Psoas muscle (tissue), 8 donors: ENCODE measurements at regions of chr4 and their contacts with region 1.

Region 1: DNA sequence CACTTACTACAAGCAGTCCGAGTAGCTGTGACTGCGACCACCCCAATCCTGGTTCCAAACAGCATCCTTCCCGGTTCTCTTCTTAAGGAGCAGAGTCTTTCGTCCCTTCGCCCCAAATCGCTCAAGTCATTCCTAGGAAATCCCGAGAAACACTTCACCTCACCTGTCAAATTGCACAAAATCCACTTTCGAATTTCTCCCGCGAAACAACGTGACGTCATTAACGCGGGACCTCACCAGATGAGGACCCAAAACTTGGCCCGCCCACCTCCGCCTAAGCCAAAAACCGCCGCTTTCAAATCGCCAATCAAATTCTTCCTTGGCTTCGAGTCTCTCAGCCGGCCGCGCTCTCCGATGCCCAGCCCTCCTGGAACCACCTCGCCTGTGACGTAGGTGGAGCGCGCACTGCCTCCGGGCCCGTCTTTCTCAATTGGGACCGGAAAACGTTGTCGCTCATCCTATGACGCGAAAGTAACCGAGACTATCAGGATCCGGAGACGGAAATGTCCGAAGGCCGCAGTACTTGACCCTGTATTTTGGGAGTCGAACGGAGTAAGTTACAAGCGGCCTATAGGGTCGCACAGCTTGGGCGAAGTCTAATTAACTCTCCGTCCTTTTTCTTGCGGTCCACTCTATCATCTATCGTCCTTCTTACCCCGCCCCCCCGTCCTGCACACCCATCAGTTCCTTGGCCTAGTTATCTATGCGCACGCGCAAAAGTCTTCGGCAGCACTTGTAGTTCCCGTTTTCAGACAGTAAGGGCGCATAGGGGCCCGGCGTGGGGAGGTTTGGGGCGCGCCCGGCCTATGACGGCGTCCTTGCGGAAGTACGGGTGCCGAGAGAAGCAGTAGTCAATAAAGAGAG is at the starts of genes LARP7 and ZGRF1:
- DNase-seq: peak; percentile 99
- ATAC-seq: peak; percentile 95 to 97 (median 96)
- H3K4me3 ChIP-seq: peak within 1 kb of the TSS; percentile 80
- H3K27ac ChIP-seq: peak within 1 kb of the TSS; percentile 94
- H3K4me1 ChIP-seq: peaks cover 17% of the 10 kb centered on the region
- H3K27me3 ChIP-seq: no peaks in the 10 kb centered on the region
- CTCF ChIP-seq: peak; percentile 84
- total RNA-seq, gene LARP7: 25.7 to 39.6 (median 32.5) TPM
- total RNA-seq, gene ZGRF1: 0.79 to 2.0 (median 1.5) TPM

Region 2: DNA sequence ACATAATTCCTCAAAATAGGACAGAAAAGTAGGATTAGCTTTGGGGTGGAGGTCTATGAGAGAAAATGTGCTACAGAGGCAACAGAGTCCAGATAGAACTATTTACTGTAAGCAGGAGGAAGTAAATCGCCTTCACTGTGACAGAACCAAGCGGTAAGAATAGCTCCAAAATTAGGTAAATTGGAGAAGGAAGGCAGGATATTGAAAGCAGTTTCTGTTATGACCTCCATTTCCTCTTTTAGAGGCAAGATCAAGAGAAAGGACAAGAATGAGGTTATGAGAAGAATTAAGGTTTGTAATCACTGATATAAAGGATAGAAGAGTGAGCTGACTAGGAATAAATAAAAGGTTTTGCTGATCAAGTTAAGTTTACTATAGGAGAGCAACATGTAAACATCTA is 76.8 kb before region 1 on chr4:
- intact Hi-C with region 1: no loop called
- DNase-seq: no peak
- ATAC-seq: no peak
- H3K4me3 ChIP-seq: no peak overlapping the region
- H3K27ac ChIP-seq: no peak overlapping the region
- H3K4me1 ChIP-seq: no peaks in the 10 kb centered on the region
- H3K27me3 ChIP-seq: no peaks in the 10 kb centered on the region
- CTCF ChIP-seq: no peak

Region 3: GRCh38 chr4:112616984-112617383 is 19.9 kb before region 1 on chr4:
- intact Hi-C with region 1: no loop called
- DNase-seq: no peak
- ATAC-seq: no peak
- H3K4me3 ChIP-seq: no peak overlapping the region
- H3K27ac ChIP-seq: no peak overlapping the region
- H3K4me1 ChIP-seq: no peaks in the 10 kb centered on the region
- H3K27me3 ChIP-seq: no peaks in the 10 kb centered on the region
- CTCF ChIP-seq: no peak

Region 4: DNA sequence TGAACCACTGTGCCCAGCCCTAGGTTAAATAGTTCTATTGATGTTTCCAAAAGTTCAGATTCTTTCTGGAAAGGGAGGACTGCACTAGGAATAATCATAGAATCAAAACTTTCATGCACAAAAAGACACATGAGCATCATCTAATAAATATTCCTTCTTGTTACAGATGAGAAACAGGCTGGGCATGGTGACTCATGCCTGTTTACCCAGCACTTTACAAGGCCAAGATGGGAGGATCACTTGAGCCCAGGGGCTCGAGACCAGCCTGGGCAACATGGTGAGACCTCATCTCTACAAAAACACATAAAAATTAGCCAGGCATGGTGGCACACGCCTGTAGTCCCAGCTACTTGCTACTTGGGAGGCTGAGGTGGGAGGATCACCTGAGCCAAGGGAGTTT is 27.7 kb after region 1 on chr4:
- intact Hi-C with region 1: loop called in 1 of 2 experiments (anchors 2 kb)
- DNase-seq: no peak
- ATAC-seq: no peak
- H3K4me3 ChIP-seq: no peak overlapping the region
- H3K27ac ChIP-seq: no peak overlapping the region
- H3K4me1 ChIP-seq: no peaks in the 10 kb centered on the region
- H3K27me3 ChIP-seq: no peaks in the 10 kb centered on the region
- CTCF ChIP-seq: no peak

Region 5: DNA sequence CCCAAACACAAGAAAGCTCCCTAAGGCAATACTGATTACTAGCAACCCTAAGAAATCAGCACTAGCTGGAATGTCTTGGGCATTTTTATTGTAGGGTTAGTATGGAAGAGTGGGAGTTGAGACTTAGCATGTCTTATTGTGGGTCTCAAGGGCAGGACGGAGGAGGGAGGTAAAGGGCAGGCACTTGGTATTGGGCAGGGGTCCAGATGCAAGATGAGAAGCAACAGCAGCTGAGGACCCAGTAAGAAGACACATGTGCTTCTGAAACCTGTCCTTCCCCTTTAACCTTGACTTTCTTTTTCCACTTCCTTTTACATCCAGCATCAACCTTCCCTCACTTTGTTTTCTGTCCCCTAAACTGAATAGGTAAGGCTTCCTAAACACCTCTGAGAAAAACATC is 37.5 kb after region 1 on chr4:
- intact Hi-C with region 1: loop called in 1 of 2 experiments (anchors 5 kb)
- DNase-seq: no peak
- ATAC-seq: peak in 1 of 4 donors; percentile 44
- H3K4me3 ChIP-seq: no peak overlapping the region
- H3K27ac ChIP-seq: peak overlapping the region; percentile 72
- H3K4me1 ChIP-seq: peaks cover 26% of the 10 kb centered on the region
- H3K27me3 ChIP-seq: no peaks in the 10 kb centered on the region
- CTCF ChIP-seq: no peak

Region 6: DNA sequence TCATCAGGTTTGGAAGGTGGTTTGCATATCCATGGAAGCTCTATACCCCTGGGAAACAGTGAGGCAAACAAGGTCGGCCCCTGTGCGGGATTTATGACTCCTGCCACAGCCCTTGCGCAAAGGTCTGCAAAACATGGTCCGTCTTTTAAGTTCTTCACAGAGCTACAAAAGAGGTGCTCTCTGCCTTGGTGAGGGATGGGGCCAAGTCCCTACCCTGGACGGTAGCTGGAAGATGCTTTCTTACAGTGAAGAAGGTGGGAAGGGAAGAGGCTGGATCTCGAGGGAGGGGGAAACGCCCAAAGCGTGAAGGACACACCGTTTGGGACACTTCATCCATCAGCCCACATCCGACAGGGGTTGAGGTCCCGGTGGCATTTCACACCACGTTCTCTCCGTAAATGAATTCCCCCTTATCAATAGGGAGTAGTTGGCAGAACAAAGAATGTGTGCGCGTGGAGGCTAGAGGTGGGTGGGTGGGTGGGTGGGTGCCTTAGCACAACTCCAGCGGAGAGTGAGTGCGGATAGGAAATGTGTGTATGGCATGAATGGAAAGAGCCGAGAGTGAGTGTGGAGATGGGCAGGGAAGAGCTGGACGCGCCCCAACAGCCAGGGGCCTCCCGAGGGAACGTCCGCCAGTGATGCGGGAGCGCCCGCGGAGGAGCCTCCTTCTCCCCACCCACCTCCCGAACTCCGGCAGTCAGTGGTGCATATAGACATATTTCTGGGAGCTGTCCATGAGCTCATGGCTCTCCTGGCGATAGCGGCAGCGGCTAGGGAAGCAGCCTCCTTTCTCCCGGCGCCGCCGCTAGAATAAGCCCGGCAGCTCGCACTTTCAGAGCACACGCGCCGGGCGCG is 68.3 kb after region 1 on chr4:
- intact Hi-C with region 1: loop called in 1 of 2 experiments (anchors 2 kb)
- DNase-seq: peak; percentile 24 to 68
- ATAC-seq: peak; percentile 72 to 83 (median 75)
- H3K4me3 ChIP-seq: peak overlapping the region; percentile 77
- H3K27ac ChIP-seq: peak overlapping the region; percentile 33
- H3K4me1 ChIP-seq: no peaks in the 10 kb centered on the region
- H3K27me3 ChIP-seq: no peaks in the 10 kb centered on the region
- CTCF ChIP-seq: no peak

Region 7: GRCh38 chr4:112765317-112765975 is 128.5 kb after region 1 on chr4:
- intact Hi-C with region 1: loop called in 1 of 2 experiments (anchors 1 kb)
- DNase-seq: no peak
- ATAC-seq: peak; percentile 46 to 84 (median 67)
- H3K4me3 ChIP-seq: no peak overlapping the region
- H3K27ac ChIP-seq: no peak overlapping the region
- H3K4me1 ChIP-seq: peaks cover 4% of the 10 kb centered on the region
- H3K27me3 ChIP-seq: no peaks in the 10 kb centered on the region
- CTCF ChIP-seq: peak; percentile 56

Region 8: DNA sequence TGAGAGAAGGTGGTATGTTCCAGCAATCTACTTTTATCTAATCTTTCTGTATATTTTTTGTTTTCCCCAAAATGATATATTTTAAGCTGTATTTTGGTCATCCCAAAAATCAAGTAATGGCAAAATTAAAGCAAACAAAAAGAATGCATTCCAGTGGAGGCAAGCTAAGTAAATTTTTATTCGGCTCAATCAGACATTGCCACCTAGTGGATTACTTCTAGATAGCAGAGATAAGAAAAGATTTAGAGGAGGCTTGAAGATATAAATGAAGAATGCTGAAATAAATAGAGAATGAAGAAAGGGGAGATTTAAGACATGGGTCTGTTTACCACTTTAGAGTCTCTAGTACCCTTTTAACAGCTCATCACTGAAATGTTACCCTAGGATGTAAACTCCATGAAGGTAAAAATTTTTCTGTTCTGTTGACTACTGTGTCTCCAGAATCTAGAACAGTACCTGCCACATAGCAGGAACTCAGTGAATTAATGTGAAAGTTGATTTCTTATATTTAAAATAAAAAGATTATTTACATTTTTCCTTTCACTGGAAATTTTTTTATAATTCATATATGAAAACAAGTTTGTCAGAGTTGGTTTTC is 301.6 kb after region 1 on chr4:
- intact Hi-C with region 1: loop called (anchors 5 to 10 kb)
- DNase-seq: no peak
- ATAC-seq: peak in 1 of 4 donors; percentile 56
- H3K4me3 ChIP-seq: no peak overlapping the region
- H3K27ac ChIP-seq: no peak overlapping the region
- H3K4me1 ChIP-seq: no peaks in the 10 kb centered on the region
- H3K27me3 ChIP-seq: no peaks in the 10 kb centered on the region
- CTCF ChIP-seq: peak; percentile 72

Region 9: GRCh38 chr4:113031212-113031611 is 394.3 kb after region 1 on chr4:
- intact Hi-C with region 1: no loop called
- DNase-seq: no peak
- ATAC-seq: no peak
- H3K4me3 ChIP-seq: no peak overlapping the region
- H3K27ac ChIP-seq: no peak overlapping the region
- H3K4me1 ChIP-seq: no peaks in the 10 kb centered on the region
- H3K27me3 ChIP-seq: no peaks in the 10 kb centered on the region
- CTCF ChIP-seq: no peak